WTC11 (cell line): ENCODE measurements at regions of chr17 and their contacts with region 1.

Region 1: DNA sequence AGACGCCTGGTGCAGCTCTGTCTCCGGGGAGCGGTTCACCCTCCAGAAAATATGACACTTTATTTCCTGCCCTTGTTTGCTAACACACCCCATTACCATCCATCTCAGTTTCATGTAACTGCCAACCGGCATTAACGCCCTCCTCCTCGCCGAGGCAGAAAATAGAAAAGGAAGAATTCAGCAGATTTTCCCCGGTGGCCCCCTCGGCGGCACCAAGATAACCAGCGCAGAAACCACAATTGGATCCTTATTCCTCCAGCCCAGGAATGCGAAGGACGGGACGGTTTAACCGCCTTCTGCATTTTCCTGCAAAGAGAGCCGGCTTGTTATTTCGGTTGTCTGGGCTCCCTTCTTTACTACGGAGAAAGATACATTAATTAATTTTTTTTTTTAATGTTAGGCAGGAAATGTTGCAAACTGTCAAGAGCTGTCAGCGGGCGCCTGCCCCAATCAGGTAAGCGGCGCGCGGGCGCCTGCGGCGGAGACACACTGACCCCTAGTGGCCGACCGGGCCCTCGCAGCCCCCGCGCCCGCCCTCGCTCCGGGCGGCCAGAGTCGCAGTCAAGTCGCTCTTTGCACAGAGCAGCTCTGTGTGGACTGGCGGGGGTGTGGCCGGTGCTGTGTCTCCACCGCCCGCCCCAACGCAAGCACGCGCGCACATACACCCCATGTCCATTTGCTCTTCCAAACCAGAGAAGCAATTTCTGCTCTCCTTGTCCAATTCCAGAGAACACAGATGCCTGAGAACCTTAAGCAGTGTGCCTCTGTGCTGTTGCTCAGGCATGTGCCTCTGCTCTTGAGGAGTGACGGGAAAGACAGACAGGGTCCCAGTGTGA is 53.6 kb downstream of the C17orf67 start:
- DNase-seq: peak; percentile 81
- ATAC-seq: peak; percentile 97
- H3K4me3 Mint-ChIP-seq: peak overlapping the region; percentile 56
- H3K27ac Mint-ChIP-seq: no peak overlapping the region
- H3K4me1 Mint-ChIP-seq: peaks cover 12% of the 10 kb centered on the region
- H3K27me3 Mint-ChIP-seq: peaks cover 48% of the 10 kb centered on the region
- CTCF ChIP-seq: peak; percentile 97

Region 2: DNA sequence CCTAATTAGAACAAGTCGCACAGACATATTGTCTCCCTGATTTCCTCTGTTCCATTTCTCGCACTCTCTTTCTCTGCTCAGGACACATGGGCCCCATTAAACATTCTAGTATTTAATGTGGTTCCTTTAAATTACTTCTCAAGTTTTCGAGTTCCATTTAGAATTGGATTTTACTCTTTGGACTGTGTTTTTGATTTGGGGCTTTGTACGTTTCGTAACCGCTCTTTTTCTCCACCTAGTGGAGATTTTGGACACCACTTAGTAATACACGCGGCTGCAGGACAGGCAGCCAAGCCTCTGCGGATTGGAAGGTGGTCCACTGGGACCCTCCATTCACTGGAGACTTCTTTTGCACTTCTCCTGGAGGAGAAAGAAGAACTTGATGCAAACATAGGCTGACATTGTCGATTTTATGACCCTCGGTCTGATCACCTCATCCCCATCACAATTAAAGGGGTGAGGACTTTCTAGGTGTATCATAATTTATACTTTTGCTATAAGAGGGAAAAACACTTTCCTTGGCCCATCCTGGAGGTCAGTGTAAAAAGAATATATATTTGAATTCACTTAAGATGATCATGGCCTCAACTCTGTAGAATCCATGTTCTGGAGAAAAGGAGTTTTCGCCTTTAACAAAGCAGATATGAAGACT is 100.9 kb before region 1 on chr17:
- CTCF ChIA-PET with region 1: interaction called, 27 read pairs
- POLR2A ChIA-PET with region 1: no interaction called
- DNase-seq: no peak
- ATAC-seq: peak; percentile 75
- H3K4me3 Mint-ChIP-seq: peak overlapping the region; percentile 85
- H3K27ac Mint-ChIP-seq: no peak overlapping the region
- H3K4me1 Mint-ChIP-seq: peaks cover 9% of the 10 kb centered on the region
- H3K27me3 Mint-ChIP-seq: no peaks in the 10 kb centered on the region; the same call in 1 of the 2 replicates
- CTCF ChIP-seq: peak; percentile 41; the same call in 1 of the 2 replicates

Region 3: DNA sequence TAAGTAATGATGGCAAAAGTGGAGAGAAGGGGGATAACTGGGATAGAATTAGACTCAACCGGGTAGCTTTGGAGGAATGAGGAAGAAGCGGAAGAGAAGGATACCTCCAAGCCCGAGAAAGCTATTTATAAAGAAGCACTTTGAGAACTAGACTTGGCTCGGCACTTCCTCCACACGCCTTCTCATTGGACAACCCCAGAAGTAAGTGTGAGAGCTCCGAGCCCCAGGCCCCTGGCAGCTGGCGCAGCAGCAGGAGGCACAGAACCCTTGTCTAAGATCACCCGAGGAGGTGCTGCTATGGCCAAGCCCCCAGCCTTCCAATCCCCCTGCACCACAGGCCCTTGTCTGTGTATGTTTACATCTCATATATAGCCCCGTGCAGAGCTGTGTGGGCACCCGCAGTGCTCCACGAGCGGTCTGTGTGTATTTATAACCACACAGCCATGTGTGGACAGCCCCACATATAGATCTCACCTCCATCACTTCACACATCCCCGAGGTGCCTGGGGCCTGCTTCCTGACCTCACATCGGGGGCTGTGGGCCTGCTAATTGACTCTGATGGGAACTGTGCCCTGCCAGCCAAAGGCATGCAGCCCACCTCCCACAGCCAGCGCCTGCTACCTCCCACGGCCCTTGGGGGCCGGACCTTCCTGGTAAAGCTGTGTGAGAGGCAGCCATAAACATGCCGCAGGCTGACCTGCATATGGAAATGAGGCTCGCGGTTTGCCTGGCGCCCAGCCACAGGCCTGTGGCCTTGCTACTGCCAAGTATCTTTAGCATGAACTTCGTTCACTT is 42.6 kb before region 1 on chr17:
- CTCF ChIA-PET with region 1: interaction called, 11 read pairs
- POLR2A ChIA-PET with region 1: no interaction called
- DNase-seq: no peak
- ATAC-seq: no peak
- H3K4me3 Mint-ChIP-seq: no peak overlapping the region
- H3K27ac Mint-ChIP-seq: no peak overlapping the region
- H3K4me1 Mint-ChIP-seq: peaks cover 8% of the 10 kb centered on the region; the same call in 1 of the 2 replicates
- H3K27me3 Mint-ChIP-seq: no peaks in the 10 kb centered on the region
- CTCF ChIP-seq: no peak

Region 4: DNA sequence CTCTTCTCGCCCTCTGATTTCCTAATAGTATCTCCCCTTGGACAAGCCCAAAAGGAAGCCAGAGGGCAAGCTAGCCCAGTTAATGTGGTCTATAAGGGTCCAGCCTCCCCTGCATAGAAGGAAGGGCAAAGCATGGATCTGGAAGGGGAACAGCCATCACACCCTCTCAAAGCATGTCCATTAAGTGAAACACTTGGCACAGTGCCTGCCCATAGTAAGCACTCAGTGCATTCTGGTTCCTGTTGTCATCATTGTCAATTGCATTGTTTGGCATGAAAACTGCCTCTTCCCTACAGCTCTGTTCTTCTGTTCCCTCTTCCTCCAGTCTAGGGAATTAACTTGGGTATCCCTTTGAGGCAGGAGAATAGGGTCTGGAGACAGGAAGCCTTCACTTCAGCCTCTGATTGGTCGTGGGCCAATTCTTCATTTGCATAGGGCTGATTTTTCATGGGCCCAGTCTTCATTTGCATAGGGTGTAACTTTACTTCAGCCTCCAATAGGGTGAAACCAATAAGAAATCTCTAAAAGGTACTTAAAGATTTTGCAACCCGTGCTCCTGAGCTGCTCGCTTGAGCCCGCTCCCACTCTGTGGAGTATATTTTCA is 27.8 kb before region 1 on chr17:
- CTCF ChIA-PET with region 1: interaction called, 26 read pairs
- POLR2A ChIA-PET with region 1: no interaction called
- DNase-seq: no peak
- ATAC-seq: peak; percentile 33
- H3K4me3 Mint-ChIP-seq: no peak overlapping the region
- H3K27ac Mint-ChIP-seq: no peak overlapping the region
- H3K4me1 Mint-ChIP-seq: peaks cover 7% of the 10 kb centered on the region
- H3K27me3 Mint-ChIP-seq: no peaks in the 10 kb centered on the region
- CTCF ChIP-seq: no peak

Region 5: GRCh38 chr17:56762988-56763387 is 17.1 kb before region 1 on chr17:
- CTCF ChIA-PET with region 1: interaction called, 28 read pairs
- POLR2A ChIA-PET with region 1: no interaction called
- DNase-seq: no peak
- ATAC-seq: no peak
- H3K4me3 Mint-ChIP-seq: no peak overlapping the region
- H3K27ac Mint-ChIP-seq: no peak overlapping the region
- H3K4me1 Mint-ChIP-seq: no peaks in the 10 kb centered on the region
- H3K27me3 Mint-ChIP-seq: no peaks in the 10 kb centered on the region
- CTCF ChIP-seq: no peak

Region 6: GRCh38 chr17:56819431-56820145 is 39.5 kb after region 1 on chr17:
- CTCF ChIA-PET with region 1: interaction called, 13 read pairs
- POLR2A ChIA-PET with region 1: no interaction called
- DNase-seq: peak; percentile 85
- ATAC-seq: peak; percentile 93
- H3K4me3 Mint-ChIP-seq: no peak overlapping the region
- H3K27ac Mint-ChIP-seq: no peak overlapping the region
- H3K4me1 Mint-ChIP-seq: peaks cover 10% of the 10 kb centered on the region
- H3K27me3 Mint-ChIP-seq: no peaks in the 10 kb centered on the region; the same call in 1 of the 2 replicates
- CTCF ChIP-seq: peak; percentile 79